ENCODE measurements at regions of chr15 and their contacts with region 1.

Region 1: DNA sequence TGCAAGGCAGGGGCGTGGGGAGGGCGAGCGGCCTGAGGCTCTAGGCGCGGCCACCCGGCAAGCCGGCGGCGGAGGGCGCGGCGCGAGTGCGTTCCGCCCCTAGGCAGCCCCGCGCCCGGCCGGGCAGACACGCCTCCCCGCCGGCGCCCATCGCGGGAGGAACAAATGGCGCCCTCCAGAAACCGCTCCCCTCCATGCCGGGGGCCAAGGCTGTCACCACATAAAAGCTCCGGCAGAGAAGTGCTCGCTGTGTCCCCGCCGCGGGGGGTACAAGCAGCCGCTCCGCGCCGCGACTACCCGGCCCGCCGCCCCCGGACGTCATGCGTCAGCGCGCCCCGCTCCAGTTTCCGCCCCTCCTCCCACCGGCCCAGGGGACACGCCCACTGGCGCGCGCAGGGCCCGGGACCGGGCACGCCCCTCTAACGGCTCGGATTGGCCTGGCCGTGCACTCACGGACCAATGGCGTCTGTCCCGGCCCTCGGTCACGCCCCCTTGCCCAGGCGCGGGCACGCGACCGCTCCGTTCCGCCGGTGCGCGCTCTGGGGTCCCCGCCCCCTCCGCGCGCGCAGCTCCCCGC is 391 bp upstream of the KLF13 start:
- DNase-seq: peak; percentile 94 to 100 (median 99)
- ATAC-seq: peak; percentile 93
- H3K4me3 ChIP-seq: peak overlapping the region; percentile 96
- H3K27ac ChIP-seq: peak overlapping the region; percentile 96
- H3K4me1 ChIP-seq: peaks cover 15% of the 10 kb centered on the region
- H3K27me3 ChIP-seq: no peaks in the 10 kb centered on the region

Region 2: GRCh38 chr15:31215490-31216214 is 110.6 kb before region 1 on chr15:
- intact Hi-C with region 1: loop called in 3 of 4 experiments (anchors 2 to 10 kb)
- DNase-seq: peak; percentile 76 to 95 (median 95)
- ATAC-seq: peak; percentile 86 to 87
- H3K4me3 ChIP-seq: peak overlapping the region; percentile 55
- H3K27ac ChIP-seq: peak overlapping the region; percentile 53
- H3K4me1 ChIP-seq: peaks cover 4% of the 10 kb centered on the region
- H3K27me3 ChIP-seq: no peaks in the 10 kb centered on the region

Region 3: DNA sequence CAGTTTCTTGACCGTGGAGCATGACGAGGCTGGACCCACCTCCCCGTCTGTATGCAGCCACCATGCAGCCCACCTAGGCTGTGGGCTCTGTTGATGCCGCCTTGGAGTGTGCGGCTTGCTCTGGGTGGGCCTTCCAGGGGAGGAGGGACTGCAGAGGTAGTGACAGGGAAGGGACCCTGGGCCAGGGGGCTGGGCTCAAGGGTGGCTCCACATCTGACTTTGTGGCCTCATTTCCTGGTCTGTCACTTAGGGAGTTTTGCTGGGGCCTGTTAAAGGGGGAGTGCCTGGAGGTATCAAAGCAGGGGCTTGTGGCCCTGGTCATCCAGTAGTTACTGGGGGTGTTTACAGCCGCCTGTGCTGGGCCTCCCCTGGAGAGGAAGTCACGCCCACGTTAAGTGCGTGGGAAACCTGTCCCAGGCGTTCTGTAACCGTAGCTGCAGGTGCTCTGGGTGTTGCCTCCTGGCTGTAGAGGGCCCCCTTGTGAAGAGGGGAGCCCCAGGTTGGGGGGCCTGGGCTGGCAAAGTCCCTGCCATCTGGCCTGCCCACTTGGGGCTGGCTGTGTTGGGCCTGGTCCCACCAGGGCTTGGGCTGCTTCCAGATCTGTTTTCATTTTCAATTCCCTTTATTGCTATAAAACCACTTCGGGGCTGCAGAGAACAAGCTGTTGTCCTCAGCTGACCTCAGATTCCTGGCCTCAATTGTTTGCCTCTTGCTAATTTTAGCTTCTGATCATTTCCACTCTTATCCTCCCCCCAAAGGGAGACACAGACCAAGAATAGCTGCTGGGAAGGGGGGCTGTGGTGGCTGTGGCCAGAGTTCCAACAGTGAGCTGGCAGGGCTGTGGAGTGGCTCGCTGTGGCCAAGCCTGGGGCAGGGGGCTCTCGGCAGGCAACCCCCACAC is 26.9 kb after region 1 on chr15:
- intact Hi-C with region 1: no loop called
- DNase-seq: peak; percentile 49 to 89 (median 89)
- ATAC-seq: peak; percentile 86 to 88
- H3K4me3 ChIP-seq: no peak overlapping the region
- H3K27ac ChIP-seq: peak overlapping the region; percentile 96
- H3K4me1 ChIP-seq: peaks cover 59% of the 10 kb centered on the region
- H3K27me3 ChIP-seq: no peaks in the 10 kb centered on the region

Region 4: DNA sequence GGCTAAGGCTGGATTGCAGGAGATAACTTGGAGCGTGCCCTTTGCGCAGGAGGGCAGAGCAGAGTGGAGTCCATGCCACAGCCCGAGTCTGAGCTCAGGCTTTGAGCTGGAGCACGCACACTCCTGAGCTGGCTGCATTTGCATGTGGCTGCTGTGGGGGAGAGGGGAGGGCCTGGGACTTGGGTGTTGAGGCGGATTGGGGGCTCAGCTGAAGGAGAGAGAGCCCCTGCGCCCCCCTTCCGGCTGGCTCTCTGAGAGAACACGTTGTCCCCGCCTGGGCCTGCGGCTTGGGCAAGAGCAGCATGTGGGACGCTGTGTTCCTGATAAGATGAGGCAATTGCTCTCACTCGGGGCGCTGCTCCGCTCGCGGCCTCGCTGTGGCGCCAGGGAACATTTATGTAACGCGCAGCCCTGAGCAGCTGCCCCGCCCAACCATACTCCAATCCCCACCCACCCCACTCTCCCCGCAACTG is 39.4 kb after region 1 on chr15:
- intact Hi-C with region 1: loop called in 2 of 4 experiments (anchors 5 kb)
- DNase-seq: peak; percentile 91 to 99 (median 98)
- ATAC-seq: peak; percentile 93
- H3K4me3 ChIP-seq: peak overlapping the region; percentile 30
- H3K27ac ChIP-seq: peak overlapping the region; percentile 98
- H3K4me1 ChIP-seq: peaks cover 49% of the 10 kb centered on the region
- H3K27me3 ChIP-seq: no peaks in the 10 kb centered on the region

Region 5: GRCh38 chr15:31379042-31379441 is 52.8 kb after region 1 on chr15:
- intact Hi-C with region 1: no loop called
- DNase-seq: no peak
- ATAC-seq: no peak
- H3K4me3 ChIP-seq: no peak overlapping the region
- H3K27ac ChIP-seq: peak overlapping the region; percentile 50
- H3K4me1 ChIP-seq: peaks cover 19% of the 10 kb centered on the region
- H3K27me3 ChIP-seq: no peaks in the 10 kb centered on the region

Region 6: GRCh38 chr15:31391687-31392671 is 65.7 kb after region 1 on chr15:
- intact Hi-C with region 1: loop called in 2 of 4 experiments (anchors 5 kb)
- DNase-seq: peak; percentile 84 to 97 (median 97)
- ATAC-seq: peak; percentile 86 to 87
- H3K4me3 ChIP-seq: peak overlapping the region; percentile 57
- H3K27ac ChIP-seq: peak overlapping the region; percentile 97
- H3K4me1 ChIP-seq: no peaks in the 10 kb centered on the region
- H3K27me3 ChIP-seq: no peaks in the 10 kb centered on the region